K562 (cell line): ENCODE measurements at regions of chr6 and their contacts with region 1.

Region 1: GRCh38 chr6:104483225-104483834 is 376.4 kb downstream of the HACE1 start:
- DNase-seq: peak in 2 of 4 experiments; percentile 6 to 20
- ATAC-seq: no peak
- H3K4me3 ChIP-seq: no peak overlapping the region
- H3K27ac ChIP-seq: no peak overlapping the region
- H3K4me1 ChIP-seq: no peaks in the 10 kb centered on the region
- H3K27me3 ChIP-seq: no peaks in the 10 kb centered on the region
- CTCF ChIP-seq: peak in 1 of 3 experiments; percentile 52; a peak in 2 of 6 replicates
- EP300 ChIP-seq: no peak
- POLR2A ChIP-seq: no peak
- RAD21 ChIP-seq: peak; percentile 43 to 52

Region 2: GRCh38 chr6:104325341-104326172 is 157.8 kb before region 1 on chr6:
- CTCF ChIA-PET with region 1: no interaction called
- POLR2A ChIA-PET with region 1: no interaction called
- in situ Hi-C with region 1: no loop called
- intact Hi-C with region 1: loop called (anchors 5 kb)
- DNase-seq: peak in 2 of 4 experiments; percentile 9 to 13
- ATAC-seq: peak; percentile 51; the same call in 1 of the 3 replicates
- H3K4me3 ChIP-seq: no peak overlapping the region
- H3K27ac ChIP-seq: no peak overlapping the region
- H3K4me1 ChIP-seq: no peaks in the 10 kb centered on the region; a peak in 1 of 5 replicates
- H3K27me3 ChIP-seq: no peaks in the 10 kb centered on the region
- CTCF ChIP-seq: peak in 2 of 3 experiments; percentile 41 to 55; a peak in 3 of 6 replicates
- EP300 ChIP-seq: no peak
- POLR2A ChIP-seq: no peak
- RAD21 ChIP-seq: peak in 1 of 2 experiments; percentile 48; a peak in 3 of 4 replicates

Region 3: DNA sequence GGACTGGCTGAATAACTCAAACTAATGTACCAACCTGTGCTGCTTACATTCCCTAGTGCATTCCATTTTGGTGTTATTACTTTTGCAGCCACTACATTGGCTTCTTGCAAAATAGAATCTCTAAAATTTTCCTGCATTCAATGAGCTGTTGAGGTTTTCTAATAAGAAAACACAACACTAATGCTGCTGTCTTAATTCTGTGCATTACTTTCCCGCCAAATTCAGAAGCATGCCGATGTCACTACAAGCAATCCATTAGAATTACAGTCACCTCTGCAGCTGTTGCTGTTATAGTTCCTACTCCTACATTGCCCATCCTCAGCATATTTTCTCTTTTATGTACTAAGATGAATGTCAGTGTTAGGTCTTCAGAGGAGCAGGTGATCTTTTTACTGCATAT is 16.9 kb after region 1 on chr6:
- CTCF ChIA-PET with region 1: no interaction called
- POLR2A ChIA-PET with region 1: no interaction called
- in situ Hi-C with region 1: no loop called
- intact Hi-C with region 1: no loop called
- DNase-seq: no peak
- ATAC-seq: no peak
- H3K4me3 ChIP-seq: no peak overlapping the region
- H3K27ac ChIP-seq: no peak overlapping the region
- H3K4me1 ChIP-seq: no peaks in the 10 kb centered on the region
- H3K27me3 ChIP-seq: no peaks in the 10 kb centered on the region
- CTCF ChIP-seq: no peak
- EP300 ChIP-seq: no peak
- POLR2A ChIP-seq: no peak
- RAD21 ChIP-seq: no peak